ENCODE measurements at regions of chr5 and their contacts with region 1.

Region 1: GRCh38 chr5:40991168-40991980 is 79.8 kb downstream of the MROH2B start:
- DNase-seq: peak; percentile 94
- H3K4me3 ChIP-seq: no peak overlapping the region
- H3K27ac ChIP-seq: peak overlapping the region; percentile 53 to 79 (median 72)
- H3K4me1 ChIP-seq: peaks cover 7 to 30% (median 22%) of the 10 kb centered on the region in 4 donors
- H3K27me3 ChIP-seq: no peaks in the 10 kb centered on the region
- CTCF ChIP-seq: no peak
- EP300 ChIP-seq: peak; percentile 41
- POLR2A ChIP-seq: no peak

Region 2: DNA sequence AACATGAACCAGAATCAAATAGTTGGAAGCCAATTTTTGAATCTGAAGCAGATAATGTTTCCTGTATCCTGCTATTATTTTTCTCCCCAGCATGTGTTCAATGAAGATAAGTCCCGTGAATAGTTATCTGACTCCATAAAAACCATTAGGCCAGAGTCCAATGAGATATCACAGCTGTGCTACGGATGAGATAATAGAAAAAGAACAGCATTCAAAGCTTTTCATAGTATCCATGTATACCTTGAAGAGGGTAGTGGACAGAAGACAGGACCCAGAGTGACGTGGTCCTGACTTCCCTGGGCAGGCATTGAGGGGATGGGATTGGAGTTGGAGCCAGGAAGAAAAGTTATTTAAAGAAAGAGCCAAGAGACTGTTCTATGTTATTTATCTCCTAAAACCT is 272.6 kb after region 1 on chr5:
- intact Hi-C with region 1: loop called (anchors 10 kb)
- DNase-seq: no peak
- H3K4me3 ChIP-seq: no peak overlapping the region
- H3K27ac ChIP-seq: peak overlapping the region in 2 of 4 donors; percentile 7 to 24
- H3K4me1 ChIP-seq: peaks cover 0 to 14% (median 5%) of the 10 kb centered on the region in 4 donors
- H3K27me3 ChIP-seq: no peaks in the 10 kb centered on the region
- CTCF ChIP-seq: no peak
- EP300 ChIP-seq: no peak
- POLR2A ChIP-seq: no peak

Measured in esophagus muscularis mucosa (tissue), 4 donors.